BJ (cell line): ENCODE measurements at regions of chr10 and their contacts with region 1.

Region 1: DNA sequence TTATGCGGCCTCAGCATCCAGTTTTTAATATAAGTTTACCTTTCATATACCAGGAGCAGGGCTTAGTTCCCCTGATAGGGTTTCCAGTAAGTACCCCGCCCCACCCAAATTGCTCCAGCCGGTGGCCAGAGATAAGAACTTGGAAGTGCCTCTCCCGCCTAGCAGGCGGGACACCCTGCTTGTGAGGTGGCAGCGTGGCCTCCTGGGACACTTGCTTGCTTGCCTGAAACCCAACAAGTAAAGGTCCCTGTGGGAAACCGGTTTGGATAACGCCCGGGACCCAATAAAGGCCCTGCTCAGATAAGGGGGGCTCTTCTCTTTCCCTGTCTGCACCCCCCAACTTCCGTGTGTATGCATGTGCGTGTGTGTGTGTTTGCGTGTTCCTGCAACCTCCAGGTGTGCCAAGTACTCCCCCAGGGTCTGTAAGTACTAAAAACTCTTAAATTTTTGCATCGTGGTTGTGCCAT is 154.3 kb downstream of the ARHGAP21 start:
- DNase-seq: no peak
- H3K4me3 ChIP-seq: no peak overlapping the region
- H3K27me3 ChIP-seq: no peaks in the 10 kb centered on the region; the same call in 1 of the 2 replicates
- CTCF ChIP-seq: no peak

Region 2: DNA sequence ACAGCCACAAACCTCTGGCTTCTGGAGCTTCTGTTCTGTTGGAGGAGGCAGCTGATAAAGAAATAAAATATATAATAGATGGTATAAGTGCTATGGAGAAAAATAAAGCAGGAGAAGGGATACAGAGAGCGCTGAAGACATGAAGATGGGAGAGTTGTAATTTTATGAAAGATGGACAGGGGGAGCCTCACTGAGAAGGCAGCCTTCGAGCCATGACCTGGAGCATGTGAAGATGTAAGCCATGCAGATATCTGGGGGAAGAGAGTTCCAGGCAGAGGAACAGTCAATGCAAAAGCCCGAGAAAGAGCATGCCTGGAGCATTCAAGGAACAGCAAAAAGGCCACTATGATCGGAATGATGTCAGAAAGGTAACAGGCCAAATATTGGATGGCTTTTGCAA is 173.0 kb before region 1 on chr10:
- CTCF ChIA-PET with region 1: no interaction called
- POLR2A ChIA-PET with region 1: no interaction called
- DNase-seq: no peak
- H3K4me3 ChIP-seq: no peak overlapping the region
- H3K27me3 ChIP-seq: peaks cover 2% of the 10 kb centered on the region
- CTCF ChIP-seq: peak; percentile 31; the same call in 1 of the 2 replicates

Region 3: DNA sequence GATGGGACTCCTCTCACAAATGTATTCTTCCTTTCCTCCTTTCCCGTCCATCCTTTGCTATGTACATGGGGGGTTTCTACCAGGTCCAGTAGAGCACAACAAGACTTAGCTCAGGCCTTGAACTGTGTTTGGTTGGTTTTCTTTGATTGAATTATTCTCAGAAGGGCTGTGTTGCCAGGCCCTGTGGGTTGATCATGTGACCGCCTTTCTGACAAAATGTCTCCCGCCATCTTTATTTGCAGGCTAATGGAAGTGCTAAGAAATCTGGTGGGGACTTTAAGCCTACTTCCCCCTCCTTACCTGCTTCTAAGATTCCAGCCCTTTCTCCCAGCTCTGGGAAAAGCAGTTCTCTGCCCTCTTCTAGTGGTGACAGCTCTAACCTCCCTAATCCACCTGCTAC is 23.8 kb before region 1 on chr10:
- CTCF ChIA-PET with region 1: no interaction called
- POLR2A ChIA-PET with region 1: no interaction called
- DNase-seq: no peak
- H3K4me3 ChIP-seq: no peak overlapping the region
- H3K27me3 ChIP-seq: no peaks in the 10 kb centered on the region
- CTCF ChIP-seq: no peak

Region 4: DNA sequence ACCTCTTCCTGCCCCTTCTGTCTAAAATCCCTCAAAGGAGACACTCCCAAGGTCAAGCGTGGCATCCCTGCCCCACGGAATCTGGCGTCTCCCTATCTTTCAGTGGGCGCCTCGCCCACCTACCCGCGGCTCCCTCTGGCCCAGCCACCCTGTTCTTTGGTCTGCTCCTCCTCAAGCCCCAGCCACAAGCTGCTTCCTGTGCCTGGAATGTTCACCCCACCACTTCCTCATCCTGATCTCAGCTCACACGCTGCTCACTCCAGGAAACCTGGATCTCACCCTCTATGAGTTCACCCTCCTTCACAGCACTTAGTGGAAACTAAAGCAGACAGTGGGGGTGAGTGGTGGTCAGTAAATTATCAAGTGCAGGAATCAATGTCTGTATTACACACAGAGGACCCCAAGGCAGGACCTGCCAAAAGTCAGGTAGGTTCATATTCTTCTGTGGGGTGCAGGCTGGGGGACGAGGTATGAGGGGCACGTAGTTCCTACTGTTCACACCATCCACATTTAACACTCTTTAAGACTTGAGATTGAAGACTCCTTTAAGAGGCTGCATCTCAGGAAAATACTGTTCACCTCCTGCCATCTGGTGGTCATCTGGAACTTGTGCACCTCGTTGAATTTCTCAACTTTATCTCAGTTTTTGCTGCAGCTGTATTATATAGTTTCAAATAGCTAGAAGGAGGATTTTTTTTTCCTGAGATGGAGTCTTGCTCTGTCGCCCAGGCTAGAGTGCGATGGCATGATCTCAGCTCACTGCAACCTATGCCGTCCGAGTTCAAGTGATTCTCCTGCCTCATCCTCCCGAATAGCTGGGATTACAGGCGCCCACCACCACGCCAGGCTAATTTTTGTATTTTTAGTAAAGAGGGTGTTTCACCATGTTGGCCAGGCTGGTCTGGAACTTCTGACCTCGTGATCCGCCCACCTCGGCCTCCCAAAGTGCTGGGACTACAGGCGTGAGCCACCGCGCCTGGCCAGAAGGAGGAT is 12.3 kb before region 1 on chr10:
- CTCF ChIA-PET with region 1: interaction called, 12 read pairs
- POLR2A ChIA-PET with region 1: no interaction called
- DNase-seq: no peak
- H3K4me3 ChIP-seq: no peak overlapping the region
- H3K27me3 ChIP-seq: 0 out of 2 replicates have a peak, but pooled peaks cover 1% of the 10 kb centered on the region
- CTCF ChIP-seq: peak; percentile 69